ENCODE measurements at regions of chr10 and their contacts with region 1.

Region 1: DNA sequence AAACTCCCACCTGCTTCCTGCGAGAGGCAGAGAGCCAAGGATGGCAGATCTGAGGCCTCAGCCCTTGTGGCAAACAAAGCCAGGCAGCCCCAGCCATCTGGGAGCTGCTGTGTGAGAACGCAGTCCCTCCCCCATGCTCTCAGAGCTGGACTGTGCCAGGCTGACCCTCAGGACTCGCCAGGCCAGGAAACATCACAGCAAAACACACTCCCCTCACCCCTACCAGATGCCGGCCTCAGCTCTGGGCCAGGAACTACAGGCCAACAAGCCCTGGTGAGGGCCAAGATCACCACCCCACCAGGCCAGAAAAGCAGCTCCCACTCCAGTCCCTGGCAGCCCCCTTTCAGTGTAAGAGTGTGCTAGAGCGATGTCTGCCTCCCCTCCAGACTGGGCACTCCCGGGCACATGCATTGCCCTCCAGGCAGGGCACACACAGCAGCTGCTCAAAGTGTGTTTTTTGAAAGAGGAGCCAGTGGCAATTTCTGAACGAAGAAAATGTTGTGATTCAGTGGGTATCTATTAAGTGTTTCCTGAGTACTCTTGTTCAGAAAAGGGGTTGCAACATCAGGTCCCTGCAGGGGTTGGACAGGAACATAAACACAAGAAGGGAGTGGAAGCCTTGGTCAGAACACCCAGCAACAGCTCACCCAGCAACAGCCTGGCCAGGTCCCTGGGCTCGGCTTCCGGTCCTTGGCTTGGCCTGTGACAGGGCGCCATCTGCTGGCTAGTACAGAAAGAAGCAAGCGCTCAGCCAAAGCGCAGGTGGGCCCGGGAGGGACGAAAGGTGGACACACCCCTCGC is 18.3 kb downstream of the LRRC20 start:
- DNase-seq: peak; percentile 88
- CTCF ChIP-seq: peak; percentile 95

Region 2: DNA sequence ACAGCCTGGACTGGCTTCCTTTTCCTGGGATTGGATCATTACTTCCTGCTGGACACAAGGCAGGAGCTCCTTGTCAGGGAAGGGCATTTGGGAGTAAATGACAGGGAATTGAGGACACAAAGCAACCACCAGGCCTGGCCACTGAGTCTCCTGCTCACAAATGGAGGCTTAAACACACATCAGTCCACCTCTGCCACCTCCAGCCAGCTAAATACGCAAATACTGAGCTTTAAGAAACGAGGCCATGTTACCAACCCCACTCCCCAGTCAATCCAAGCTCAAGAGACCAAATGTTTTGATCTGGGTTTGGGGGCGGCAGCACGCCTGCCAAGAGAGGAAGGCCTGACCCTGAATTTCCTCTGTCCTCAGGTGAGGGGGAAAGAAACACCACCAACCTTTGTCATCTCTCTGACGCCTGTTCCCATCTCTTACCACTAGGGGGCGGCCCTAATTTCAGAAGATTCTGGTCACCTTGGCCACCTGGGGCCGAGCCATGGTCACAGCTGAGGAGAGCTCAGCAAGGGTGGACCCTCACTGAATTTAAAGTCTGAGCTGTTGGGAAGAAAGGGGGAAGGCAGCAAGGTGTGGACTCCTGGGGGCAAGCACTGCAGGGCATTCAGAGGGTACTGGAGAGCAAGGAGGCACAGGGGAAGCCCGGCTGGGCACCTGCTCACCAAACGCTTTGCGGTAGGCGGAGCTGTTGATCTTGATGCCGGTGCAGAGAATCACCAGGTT is 248.1 kb before region 1 on chr10:
- CTCF ChIA-PET with region 1: interaction called, 40 read pairs
- POLR2A ChIA-PET with region 1: no interaction called
- DNase-seq: peak; percentile 83
- CTCF ChIP-seq: peak; percentile 77

Region 3: DNA sequence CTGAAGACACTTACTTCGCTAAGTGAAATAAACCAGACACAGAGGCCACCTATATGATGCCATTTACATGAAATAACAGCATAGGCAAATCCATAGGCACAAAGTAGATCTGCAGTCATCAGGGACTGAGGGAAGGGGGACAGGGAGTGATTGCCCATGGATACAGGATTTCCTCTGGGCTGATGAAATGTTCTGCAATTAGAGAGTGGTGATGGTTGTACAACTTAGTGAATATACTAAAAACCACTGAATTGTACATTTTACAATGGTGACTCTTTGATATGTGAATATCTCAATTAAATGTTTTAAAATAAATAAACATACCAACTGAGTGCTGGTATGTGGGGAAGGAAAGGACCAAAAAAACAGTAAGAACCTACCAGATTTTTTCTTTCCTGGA is 151.3 kb before region 1 on chr10:
- CTCF ChIA-PET with region 1: interaction called, 529 read pairs
- POLR2A ChIA-PET with region 1: no interaction called
- DNase-seq: no peak
- CTCF ChIP-seq: no peak

Region 4: DNA sequence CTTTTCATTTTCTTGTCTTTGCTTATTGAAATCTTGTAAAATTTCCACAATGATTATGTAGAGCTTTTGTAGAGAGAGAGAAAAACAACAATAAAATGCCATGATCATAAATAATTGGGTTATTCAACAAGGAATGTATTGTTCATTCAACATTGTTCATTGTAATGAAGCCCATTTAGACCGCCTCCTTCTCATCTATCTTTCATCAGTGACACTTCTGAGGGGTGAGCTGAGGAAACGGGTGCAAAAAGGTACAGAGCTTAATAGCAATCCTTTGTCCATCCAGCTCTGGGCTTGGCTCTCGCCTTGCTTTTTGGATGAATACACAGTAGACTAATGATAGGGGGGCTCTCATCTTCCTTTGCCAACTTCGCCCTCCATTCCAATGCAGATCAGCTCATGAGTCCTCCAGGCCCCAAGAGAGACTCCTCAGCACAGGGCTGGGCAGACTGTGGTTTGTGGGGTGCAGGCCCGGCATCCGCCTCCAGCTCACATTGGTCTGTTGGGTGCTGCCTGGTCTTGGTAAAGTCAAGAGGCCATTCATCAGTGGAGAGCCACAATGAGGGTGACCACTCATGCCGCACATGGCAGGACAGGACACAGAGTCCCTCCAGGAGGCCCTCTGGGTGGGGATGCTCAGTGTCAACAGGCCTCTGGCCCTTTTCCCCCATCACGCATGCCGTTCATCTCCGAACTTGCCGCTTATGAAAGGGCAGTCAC is 113.0 kb before region 1 on chr10:
- CTCF ChIA-PET with region 1: interaction called, 12 read pairs
- POLR2A ChIA-PET with region 1: no interaction called
- DNase-seq: no peak
- CTCF ChIP-seq: no peak

Region 5: DNA sequence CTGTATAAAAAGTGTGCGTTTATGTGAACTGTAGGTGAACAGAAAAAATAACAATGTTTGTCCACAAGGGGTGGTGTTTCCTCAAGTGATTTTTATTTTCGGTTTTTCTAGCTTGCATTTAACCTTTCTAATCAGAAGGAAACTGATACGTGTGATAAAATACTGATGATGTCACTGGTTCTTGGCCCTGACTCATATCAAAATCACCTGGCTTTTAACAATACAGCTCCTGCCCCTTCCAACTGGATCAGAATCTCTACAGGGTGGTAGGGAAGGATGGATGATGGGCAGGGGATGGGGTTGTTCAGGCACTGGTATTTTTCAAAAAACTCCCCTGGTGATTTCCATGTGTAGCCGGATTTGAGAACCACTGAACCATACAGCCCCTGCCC is 91.2 kb before region 1 on chr10:
- CTCF ChIA-PET with region 1: interaction called, 19 read pairs
- POLR2A ChIA-PET with region 1: no interaction called
- DNase-seq: peak; percentile 75
- CTCF ChIP-seq: peak; percentile 34

Region 6: DNA sequence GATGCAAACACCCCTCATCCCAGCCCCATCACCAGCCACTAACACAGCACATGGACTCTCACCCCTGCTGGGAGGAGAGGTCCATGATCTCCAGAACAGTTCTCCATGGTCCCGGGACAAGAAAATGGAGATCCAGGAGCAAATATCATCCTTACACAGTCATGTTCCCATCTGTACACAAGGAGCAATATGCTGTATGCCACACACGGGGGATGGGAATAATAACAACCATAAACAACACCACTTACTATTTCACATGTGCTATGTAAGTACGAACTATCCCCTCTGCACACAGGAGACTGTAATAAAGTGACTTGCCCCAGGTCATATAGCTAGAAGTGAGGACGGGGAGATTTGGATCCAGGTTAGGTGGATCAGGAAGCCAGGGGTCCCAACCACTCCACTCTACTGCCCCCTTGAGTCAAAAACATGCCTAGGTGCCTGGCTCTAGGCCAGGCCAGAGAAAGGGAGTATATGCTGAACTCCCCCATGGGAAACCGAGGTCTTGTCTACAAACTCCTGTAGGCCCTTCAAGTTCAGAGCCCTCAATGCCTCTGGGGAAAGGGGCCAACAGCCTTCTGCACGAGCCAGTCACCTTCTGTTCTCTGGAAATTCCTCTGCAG is 15.8 kb before region 1 on chr10:
- CTCF ChIA-PET with region 1: interaction called, 84 read pairs
- POLR2A ChIA-PET with region 1: no interaction called
- DNase-seq: peak; percentile 56
- CTCF ChIP-seq: peak; percentile 37

Region 7: GRCh38 chr10:70391654-70392053 is 27.5 kb after region 1 on chr10:
- CTCF ChIA-PET with region 1: interaction called, 14 read pairs
- POLR2A ChIA-PET with region 1: no interaction called
- DNase-seq: no peak
- CTCF ChIP-seq: no peak

Region 8: DNA sequence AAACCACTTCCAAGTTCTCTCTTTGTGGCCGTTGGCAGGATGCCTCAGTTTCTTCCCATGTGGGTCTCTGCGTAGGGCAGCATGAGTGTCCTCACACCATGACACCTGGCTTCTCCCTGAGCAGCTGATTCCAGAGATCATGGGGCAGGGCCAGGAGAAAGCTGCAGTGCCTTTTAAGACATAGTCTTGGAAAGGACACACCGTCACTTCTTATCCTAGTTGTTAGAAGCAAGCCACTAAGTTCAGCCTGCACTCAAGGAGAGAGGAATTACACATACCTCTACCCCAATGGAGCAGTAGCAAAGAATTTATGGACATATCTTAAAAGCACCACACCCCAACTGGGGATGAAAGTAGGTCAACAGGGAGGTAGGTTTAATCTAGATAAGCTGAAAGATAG is 60.9 kb after region 1 on chr10:
- CTCF ChIA-PET with region 1: no interaction called
- POLR2A ChIA-PET with region 1: no interaction called
- DNase-seq: no peak
- CTCF ChIP-seq: no peak

Region 9: GRCh38 chr10:70523057-70523456 is 158.9 kb after region 1 on chr10:
- CTCF ChIA-PET with region 1: no interaction called
- POLR2A ChIA-PET with region 1: no interaction called
- DNase-seq: no peak
- CTCF ChIP-seq: no peak

Region 10: DNA sequence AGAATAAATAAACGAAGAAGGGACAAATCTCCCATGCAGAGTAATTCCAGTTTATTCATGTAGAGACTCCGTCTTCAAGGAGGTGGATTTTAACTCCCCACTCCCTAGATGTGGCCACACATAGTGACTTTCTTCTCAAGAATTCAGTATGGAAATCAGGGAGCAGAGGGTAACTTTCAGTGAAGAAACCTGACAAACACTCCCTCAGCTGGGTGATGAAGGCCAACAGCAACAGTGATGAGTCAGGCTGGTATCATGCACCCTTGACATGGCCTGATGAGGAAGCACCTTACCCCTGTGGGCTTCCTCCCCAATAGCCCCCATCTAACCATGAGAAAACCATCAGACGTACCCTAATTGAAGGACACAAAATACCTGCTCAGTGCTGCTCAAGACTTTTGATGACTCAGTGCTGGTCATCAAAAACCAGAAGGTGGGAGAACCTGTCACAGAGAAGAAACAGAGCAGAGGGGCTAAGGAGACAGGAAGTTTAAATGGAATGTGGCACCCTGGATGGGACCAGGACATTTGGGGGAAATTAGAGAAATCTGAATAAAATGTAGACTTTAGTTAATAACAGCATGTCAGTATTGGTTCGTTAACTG is 358.8 kb after region 1 on chr10:
- CTCF ChIA-PET with region 1: no interaction called
- POLR2A ChIA-PET with region 1: no interaction called
- DNase-seq: no peak
- CTCF ChIP-seq: no peak